PC-9 (cell line): ENCODE measurements at regions of chr15 and their contacts with region 1.

Region 1: DNA sequence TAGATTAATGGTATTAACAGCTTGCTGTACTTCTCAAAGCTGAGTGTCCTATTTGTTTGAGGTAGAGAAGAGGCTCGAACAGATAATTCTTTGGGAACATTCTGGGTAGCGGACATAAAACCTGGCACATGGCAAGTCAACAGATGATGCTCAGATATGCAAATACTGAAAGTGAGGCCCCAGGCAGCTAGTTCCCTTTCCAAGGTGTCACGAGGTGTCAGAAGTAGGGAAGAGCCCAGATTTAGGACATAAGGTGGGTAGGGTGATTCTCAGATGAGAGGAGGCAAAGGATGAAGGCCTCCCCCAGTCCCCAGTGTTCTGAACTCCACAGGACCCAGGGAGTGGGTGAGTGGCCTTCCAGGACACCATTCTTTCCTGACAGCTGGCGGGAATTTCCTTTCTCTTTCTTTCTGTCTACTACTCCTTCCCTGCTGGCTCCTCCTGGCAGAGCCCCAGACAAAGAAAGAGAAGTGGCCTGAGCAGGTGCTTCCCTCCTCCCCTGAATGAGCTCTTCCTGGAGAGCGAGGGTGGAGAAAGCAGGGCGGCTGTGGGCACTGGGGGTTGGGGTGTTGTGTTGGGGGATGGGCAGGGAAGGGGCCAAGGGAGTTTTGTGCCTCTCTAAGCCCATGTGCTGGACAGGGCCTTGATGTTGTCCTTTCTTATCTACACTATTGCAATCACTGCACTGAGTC is 87.5 kb downstream of the CORO2B start:
- DNase-seq: no peak
- H3K4me3 ChIP-seq: no peak overlapping the region
- H3K27ac ChIP-seq: no peak overlapping the region
- H3K4me1 ChIP-seq: no peaks in the 10 kb centered on the region
- H3K27me3 ChIP-seq: no peaks in the 10 kb centered on the region
- CTCF ChIP-seq: no peak

Region 2: DNA sequence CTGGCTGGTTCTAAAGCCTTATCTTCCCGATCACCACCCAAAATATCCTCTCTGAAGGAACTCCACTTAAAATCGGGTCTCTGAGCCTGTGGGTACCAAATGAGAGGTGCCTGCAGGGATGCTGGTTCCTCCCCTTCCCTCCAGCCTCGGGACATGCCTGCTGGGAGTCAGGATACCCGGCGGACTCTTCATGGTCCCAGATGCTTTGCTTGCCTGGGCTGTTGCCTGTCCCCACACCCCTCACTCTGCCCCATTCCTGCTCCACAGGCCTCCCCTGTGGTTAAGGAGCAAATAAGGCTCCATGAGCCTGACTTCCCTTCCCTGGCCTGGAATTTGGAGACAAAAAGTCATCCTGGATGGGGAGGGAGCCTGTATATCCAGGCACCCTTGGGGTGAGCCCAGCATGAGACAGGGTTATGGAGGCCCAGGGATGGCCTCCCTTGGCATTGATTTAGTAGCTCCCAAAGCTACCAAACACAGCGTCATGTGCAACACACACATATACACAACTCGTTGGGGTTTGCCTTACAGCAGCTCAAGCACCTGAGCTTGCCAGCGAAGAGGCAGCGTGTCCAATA is 99.8 kb before region 1 on chr15:
- CTCF ChIA-PET with region 1: interaction called, 4 read pairs
- POLR2A ChIA-PET with region 1: interaction called, 14 read pairs
- intact Hi-C with region 1: no loop called
- DNase-seq: no peak
- H3K4me3 ChIP-seq: no peak overlapping the region
- H3K27ac ChIP-seq: no peak overlapping the region
- H3K4me1 ChIP-seq: no peaks in the 10 kb centered on the region
- H3K27me3 ChIP-seq: no peaks in the 10 kb centered on the region
- CTCF ChIP-seq: no peak

Region 3: DNA sequence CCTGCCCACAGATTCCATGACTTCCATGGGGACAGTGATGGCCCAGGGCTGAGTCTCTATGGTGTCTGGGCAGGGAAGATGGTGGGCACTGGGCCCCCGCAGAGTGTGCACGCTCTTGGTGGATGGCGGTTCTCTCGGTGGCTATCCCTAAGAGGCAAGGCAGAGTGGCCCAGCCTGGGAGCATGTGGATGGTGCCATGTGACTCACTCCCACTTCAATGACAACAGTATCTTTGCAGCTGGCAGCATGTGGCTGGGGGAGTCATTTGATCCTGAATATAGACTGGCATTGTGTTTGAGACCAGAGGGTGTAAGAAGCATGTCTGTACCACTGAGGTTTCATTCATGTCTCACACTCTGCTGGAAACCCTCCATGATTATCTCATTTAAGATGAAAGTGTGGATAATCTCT is 13.7 kb after region 1 on chr15:
- CTCF ChIA-PET with region 1: interaction called, 14 read pairs
- POLR2A ChIA-PET with region 1: interaction called, 3 read pairs
- intact Hi-C with region 1: no loop called
- DNase-seq: no peak
- H3K4me3 ChIP-seq: no peak overlapping the region
- H3K27ac ChIP-seq: no peak overlapping the region
- H3K4me1 ChIP-seq: no peaks in the 10 kb centered on the region
- H3K27me3 ChIP-seq: no peaks in the 10 kb centered on the region
- CTCF ChIP-seq: no peak

Region 4: GRCh38 chr15:68749793-68750192 is 83.5 kb after region 1 on chr15:
- CTCF ChIA-PET with region 1: interaction called, 16 read pairs
- POLR2A ChIA-PET with region 1: no interaction called
- intact Hi-C with region 1: no loop called
- DNase-seq: no peak
- H3K4me3 ChIP-seq: no peak overlapping the region
- H3K27ac ChIP-seq: no peak overlapping the region
- H3K4me1 ChIP-seq: no peaks in the 10 kb centered on the region
- H3K27me3 ChIP-seq: no peaks in the 10 kb centered on the region
- CTCF ChIP-seq: no peak

Region 5: DNA sequence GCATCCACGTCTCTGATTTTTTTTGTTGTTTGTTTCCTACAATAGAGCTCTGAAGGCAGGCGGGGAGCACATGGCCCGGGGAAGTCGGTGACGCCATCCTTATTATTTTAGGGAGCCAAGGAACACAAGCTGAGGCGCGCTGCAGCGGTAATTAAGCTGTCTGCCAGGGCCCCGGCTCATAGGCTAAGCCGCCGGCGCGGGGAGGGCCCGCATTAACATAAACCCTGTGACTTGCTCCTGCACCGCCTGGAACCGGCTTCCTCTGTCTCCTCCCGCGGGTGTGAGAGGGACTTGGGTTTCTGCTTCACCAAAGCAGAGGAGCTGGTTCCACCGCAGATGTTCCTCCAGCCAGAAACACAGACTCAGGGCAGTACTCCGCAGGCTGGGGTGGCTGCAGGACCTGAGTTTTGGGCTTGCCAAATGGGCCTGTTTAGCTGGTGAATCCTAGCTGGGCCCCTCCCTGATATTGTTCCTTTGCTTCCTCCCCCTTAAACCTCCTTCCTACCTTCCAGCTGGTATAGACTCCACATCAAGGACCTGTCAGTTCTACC is 129.1 kb after region 1 on chr15:
- CTCF ChIA-PET with region 1: no interaction called
- POLR2A ChIA-PET with region 1: no interaction called
- intact Hi-C with region 1: no loop called
- DNase-seq: no peak
- H3K4me3 ChIP-seq: no peak overlapping the region
- H3K27ac ChIP-seq: no peak overlapping the region
- H3K4me1 ChIP-seq: no peaks in the 10 kb centered on the region
- H3K27me3 ChIP-seq: no peaks in the 10 kb centered on the region
- CTCF ChIP-seq: no peak